ENCODE measurements at regions of chr4 and their contacts with region 1.

Region 1: GRCh38 chr4:113781439-113782040 is 20.0 kb upstream of the CAMK2D start:
- DNase-seq: no peak
- H3K4me3 ChIP-seq: no peak overlapping the region
- H3K27ac ChIP-seq: no peak overlapping the region
- H3K4me1 ChIP-seq: no peaks in the 10 kb centered on the region
- H3K27me3 ChIP-seq: no peaks in the 10 kb centered on the region
- CTCF ChIP-seq: peak; percentile 39 to 72 (median 60)
- POLR2A ChIP-seq: no peak

Region 2: DNA sequence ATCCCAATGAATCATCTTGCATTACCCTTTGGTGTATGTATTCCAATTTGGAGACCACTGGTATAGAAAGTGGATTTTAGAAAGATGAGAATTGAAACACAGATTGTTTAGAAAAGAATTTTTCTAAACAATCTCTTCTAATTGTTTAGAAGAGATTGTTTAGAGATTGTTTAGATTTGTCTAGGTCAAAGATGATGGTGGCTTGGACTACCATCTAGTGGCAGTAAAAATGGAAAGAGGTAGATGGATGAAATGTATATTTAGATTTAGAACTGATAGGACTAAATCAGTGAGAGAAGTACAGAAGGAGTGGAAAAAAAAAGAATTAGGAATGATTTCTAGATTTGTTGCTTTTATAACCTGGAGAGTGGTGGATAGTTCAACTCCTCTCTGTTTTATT is 127.3 kb after region 1 on chr4:
- intact Hi-C with region 1: no loop called
- DNase-seq: no peak
- H3K4me3 ChIP-seq: no peak overlapping the region
- H3K27ac ChIP-seq: no peak overlapping the region
- H3K4me1 ChIP-seq: no peaks in the 10 kb centered on the region
- H3K27me3 ChIP-seq: no peaks in the 10 kb centered on the region
- CTCF ChIP-seq: peak in 2 of 6 experiments; percentile 13 to 24
- POLR2A ChIP-seq: no peak

Region 3: DNA sequence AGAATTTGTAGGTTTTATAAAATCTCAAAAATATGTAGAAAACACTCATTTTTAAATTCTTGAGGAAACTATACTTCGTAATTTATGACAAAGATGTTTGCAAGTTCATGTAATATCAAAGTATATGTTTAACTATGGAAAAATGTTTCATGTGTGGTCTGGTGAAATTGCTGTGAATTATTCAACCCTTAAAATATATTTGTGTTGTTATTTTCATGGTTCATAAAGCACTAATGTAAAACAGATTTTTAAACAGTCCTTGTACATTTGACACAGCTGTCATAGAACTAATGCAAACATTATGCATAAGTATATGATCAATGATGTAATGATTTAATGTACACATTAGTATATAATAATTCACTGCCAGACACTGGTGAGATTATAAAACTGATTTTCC is 281.0 kb after region 1 on chr4:
- intact Hi-C with region 1: loop called in 1 of 2 experiments (anchors 10 kb)
- DNase-seq: no peak
- H3K4me3 ChIP-seq: no peak overlapping the region
- H3K27ac ChIP-seq: no peak overlapping the region
- H3K4me1 ChIP-seq: no peaks in the 10 kb centered on the region
- H3K27me3 ChIP-seq: no peaks in the 10 kb centered on the region
- CTCF ChIP-seq: no peak
- POLR2A ChIP-seq: no peak

Region 4: DNA sequence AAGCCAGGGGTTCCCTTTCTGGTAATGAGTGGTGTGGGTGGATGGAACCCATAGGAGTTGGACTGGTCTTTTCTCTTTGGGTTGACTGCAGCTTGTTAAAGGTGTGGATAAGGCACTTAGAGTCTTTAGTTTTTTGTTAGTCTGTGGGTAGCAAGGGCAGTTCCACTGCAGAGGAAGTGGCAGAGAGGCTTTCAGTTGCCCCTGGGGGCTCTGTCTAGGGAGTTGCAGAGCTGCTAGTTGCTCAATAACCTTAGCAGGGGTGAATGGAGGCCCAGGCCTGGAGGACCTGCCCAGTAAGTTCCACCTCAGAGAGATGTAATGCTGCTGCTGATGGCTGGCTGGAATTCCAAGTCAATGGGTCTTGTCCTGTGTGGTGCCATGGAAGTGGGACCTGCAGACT is 1614.5 kb after region 1 on chr4:
- intact Hi-C with region 1: no loop called
- DNase-seq: no peak
- H3K4me3 ChIP-seq: no peak overlapping the region
- H3K27ac ChIP-seq: no peak overlapping the region
- H3K4me1 ChIP-seq: no peaks in the 10 kb centered on the region
- H3K27me3 ChIP-seq: no peaks in the 10 kb centered on the region
- CTCF ChIP-seq: no peak
- POLR2A ChIP-seq: no peak